ENCODE measurements at regions of chr17 and their contacts with region 1.

Region 1: DNA sequence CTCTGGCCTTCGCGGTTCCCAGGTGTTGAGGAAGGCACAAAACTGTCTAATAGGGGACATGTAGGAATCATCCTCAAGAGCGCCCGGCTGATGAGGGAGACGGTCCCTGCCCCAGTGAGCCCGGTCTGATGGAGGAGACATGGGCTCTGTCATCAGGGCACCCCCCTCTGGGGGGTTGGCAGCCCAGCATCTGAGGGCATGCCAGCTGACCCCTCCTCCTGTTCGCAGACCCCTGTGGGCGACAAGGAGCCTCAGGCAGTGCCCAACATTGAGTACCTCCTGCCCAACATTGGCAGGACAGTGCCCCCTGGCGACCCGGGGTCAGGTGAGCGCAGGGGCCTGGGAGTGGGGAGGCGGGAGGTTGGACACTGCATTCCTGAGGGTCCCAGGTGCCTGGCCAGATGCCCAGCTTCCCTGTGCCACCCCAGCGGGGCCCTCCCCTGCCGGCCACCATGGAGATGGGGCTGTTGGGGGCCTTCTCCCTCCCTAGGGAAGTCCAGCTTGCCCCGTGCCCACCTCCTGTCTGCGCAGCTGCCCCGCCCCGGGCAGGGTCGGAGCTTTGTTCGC is 70.0 kb downstream of the ARHGAP23 start:
- DNase-seq: no peak
- ATAC-seq: no peak
- H3K4me3 ChIP-seq: no peak overlapping the region
- H3K4me3 Mint-ChIP-seq: no peak overlapping the region
- H3K27ac ChIP-seq: no peak overlapping the region
- H3K27ac Mint-ChIP-seq: no peak overlapping the region
- H3K4me1 ChIP-seq: no peaks in the 10 kb centered on the region
- H3K4me1 Mint-ChIP-seq: peaks cover 0 to 1% (median 0%) of the 10 kb centered on the region in 7 donors
- H3K27me3 ChIP-seq: no peaks in the 10 kb centered on the region
- H3K27me3 Mint-ChIP-seq: peaks cover 0 to 7% (median 3%) of the 10 kb centered on the region in 5 donors

Region 2: GRCh38 chr17:38421871-38422827 is 76.1 kb before region 1 on chr17:
- CTCF ChIA-PET with region 1: interaction called, 3 read pairs
- POLR2A ChIA-PET with region 1: no interaction called
- intact Hi-C with region 1: loop called in 1 of 2 experiments (anchors 2 kb)
- DNase-seq: no peak
- ATAC-seq: no peak
- H3K4me3 ChIP-seq: no peak overlapping the region
- H3K4me3 Mint-ChIP-seq: no peak overlapping the region
- H3K27ac ChIP-seq: no peak overlapping the region
- H3K27ac Mint-ChIP-seq: no peak overlapping the region
- H3K4me1 ChIP-seq: peaks cover 0 to under 1% of the 10 kb centered on the region in 2 donors
- H3K4me1 Mint-ChIP-seq: peaks cover 0 to 20% (median 6%) of the 10 kb centered on the region in 7 donors
- H3K27me3 ChIP-seq: peaks cover 2 to 8% of the 10 kb centered on the region in 2 donors
- H3K27me3 Mint-ChIP-seq: peaks cover 34 to 69% (median 61%) of the 10 kb centered on the region in 5 donors